Endothelial cell of umbilical vein (primary cell): ENCODE measurements at regions of chr2 and their contacts with region 1.

Region 1: DNA sequence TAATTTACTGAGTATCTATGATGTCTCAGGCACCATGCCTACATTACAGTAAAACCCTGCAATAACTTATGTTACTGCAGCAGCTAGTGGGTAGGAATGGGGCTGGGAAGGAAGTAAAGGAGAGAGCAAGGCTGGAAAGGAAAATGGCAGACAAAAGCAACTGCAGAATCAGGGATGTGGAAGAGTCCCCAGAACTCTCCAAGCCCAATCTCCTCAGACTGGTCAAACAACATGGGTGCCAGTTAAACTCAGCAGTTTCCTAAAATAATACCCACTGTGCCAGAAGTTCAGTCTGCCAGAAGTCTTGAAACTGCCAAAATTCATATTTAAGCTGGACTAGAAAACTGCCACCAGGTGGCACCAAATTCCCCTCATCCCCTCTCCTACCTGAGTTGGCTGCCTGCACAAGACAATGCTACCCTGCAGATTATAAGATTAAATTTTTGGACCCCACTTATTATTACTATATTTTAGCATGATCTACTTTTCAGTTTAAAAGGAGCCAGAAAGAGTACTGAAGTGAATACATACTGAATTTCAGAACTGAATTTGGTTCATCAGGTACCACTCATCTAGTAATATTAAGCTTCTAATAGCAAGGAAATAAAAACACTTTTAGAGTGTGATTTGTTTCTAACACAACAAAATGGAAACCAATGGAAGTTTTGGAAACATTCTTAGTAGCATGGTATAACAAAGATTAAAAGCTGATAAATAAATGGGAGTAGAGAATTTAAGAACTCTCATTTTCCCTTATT is 86.8 kb upstream of the DNER start:
- DNase-seq: peak; percentile 79
- H3K4me3 ChIP-seq: no peak overlapping the region
- H3K27ac ChIP-seq: no peak overlapping the region
- H3K4me1 ChIP-seq: no peaks in the 10 kb centered on the region
- H3K27me3 ChIP-seq: no peaks in the 10 kb centered on the region
- CTCF ChIP-seq: peak; percentile 64 to 69
- POLR2A ChIP-seq: no peak

Region 2: DNA sequence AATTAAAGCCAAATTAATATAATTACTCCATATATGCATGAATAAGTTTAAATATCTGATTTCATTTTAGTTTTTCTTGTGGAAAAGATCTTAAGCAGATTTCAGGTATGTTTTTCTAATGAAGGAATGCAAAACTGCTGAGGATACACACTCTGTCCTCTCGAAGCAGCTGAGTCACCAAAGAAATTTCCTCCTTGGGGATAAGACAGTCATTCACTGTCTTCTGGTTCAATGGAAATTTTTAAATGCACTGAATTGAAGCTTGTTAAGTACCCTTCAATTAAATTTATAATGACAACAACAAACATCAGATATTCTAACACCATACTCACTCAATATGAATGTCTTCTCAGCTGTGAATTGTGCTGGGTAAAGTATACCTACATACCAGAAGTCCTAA is 14.7 kb after region 1 on chr2:
- CTCF ChIA-PET with region 1: interaction called, 28 read pairs
- POLR2A ChIA-PET with region 1: no interaction called
- dilution Hi-C with region 1: no loop called
- intact Hi-C with region 1: no loop called
- DNase-seq: peak; percentile 38
- H3K4me3 ChIP-seq: no peak overlapping the region
- H3K27ac ChIP-seq: peak overlapping the region; percentile 32
- H3K4me1 ChIP-seq: peaks cover 13% of the 10 kb centered on the region
- H3K27me3 ChIP-seq: no peaks in the 10 kb centered on the region
- CTCF ChIP-seq: no peak
- POLR2A ChIP-seq: no peak

Region 3: GRCh38 chr2:229852565-229852964 is 51.4 kb after region 1 on chr2:
- CTCF ChIA-PET with region 1: interaction called, 10 read pairs
- POLR2A ChIA-PET with region 1: no interaction called
- dilution Hi-C with region 1: no loop called
- intact Hi-C with region 1: no loop called
- DNase-seq: peak; percentile 97
- H3K4me3 ChIP-seq: peak overlapping the region in 1 of 3 experiments; percentile 37
- H3K27ac ChIP-seq: peak overlapping the region; percentile 77
- H3K4me1 ChIP-seq: peaks cover 57% of the 10 kb centered on the region
- H3K27me3 ChIP-seq: no peaks in the 10 kb centered on the region
- CTCF ChIP-seq: no peak
- POLR2A ChIP-seq: peak; percentile 28

Region 4: DNA sequence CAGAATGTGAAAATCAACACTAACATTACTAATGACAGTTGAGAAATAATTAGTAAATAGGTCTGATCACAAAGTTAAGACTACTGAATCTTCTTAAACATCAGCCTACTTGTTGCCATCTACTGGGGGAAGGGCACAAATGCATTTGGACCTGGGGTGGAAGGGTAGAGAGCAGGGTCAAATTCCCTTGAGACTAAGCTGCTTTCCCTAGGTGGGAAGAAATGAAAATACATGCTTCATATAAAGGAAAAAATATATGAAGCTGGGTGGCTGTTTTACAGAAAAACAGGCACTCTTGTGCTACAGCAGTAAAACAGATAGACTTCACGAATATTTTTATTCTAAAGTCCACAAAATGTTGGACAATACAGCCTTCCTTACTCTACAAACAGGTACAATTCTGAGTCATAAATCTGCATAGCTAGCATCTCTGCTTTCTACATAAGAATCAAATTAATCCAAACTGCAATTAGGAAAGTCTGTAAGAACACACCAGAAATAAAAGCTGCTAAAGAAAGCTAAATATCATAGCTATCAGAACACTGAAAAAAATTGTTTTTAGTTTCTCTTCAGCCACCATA is 109.7 kb after region 1 on chr2:
- CTCF ChIA-PET with region 1: interaction called, 50 read pairs
- POLR2A ChIA-PET with region 1: no interaction called
- dilution Hi-C with region 1: no loop called
- intact Hi-C with region 1: loop called (anchors 2 kb)
- DNase-seq: peak; percentile 46
- H3K4me3 ChIP-seq: no peak overlapping the region
- H3K27ac ChIP-seq: no peak overlapping the region
- H3K4me1 ChIP-seq: no peaks in the 10 kb centered on the region
- H3K27me3 ChIP-seq: no peaks in the 10 kb centered on the region
- CTCF ChIP-seq: peak; percentile 15 to 17
- POLR2A ChIP-seq: no peak

Region 5: DNA sequence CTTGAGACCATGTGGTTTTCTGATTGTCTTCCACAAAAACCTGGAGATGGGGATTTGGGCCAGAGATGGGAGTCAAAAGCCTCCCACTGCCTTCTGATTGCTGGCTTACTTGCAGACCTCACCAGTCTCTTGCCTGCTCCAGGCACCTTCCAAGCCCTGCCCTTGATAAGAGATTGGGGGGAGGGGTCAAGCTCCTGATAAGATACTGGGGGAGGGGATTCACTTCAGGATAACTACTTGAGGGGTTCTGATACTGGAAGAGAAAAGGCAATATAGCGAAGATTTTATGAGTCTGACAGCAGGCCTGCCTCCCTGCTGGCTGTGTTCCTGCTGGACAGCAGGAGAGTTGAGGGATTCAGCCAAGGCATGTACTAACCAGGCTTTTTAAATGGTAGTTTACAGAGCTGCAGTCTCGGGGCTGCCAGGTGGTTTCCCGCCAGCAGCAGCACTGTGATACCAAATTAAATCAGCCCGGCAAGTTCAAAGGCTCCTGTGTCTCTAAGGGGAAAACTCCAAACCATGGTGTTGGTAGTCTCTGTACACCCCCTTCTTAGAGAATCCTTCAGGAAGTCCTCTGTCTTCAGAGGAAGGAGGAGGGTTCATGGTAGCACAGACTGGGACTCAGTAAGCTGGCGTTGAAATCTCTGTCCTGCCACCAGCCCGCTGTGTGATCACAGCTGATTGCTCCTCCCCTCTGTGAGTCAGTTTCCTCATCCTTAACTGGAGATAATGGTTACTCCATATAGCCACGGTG is 179.4 kb after region 1 on chr2:
- CTCF ChIA-PET with region 1: interaction called, 10 read pairs
- POLR2A ChIA-PET with region 1: no interaction called
- dilution Hi-C with region 1: no loop called
- intact Hi-C with region 1: loop called (anchors 2 kb)
- DNase-seq: peak; percentile 90
- H3K4me3 ChIP-seq: no peak overlapping the region
- H3K27ac ChIP-seq: peak overlapping the region; percentile 55
- H3K4me1 ChIP-seq: peaks cover 7% of the 10 kb centered on the region
- H3K27me3 ChIP-seq: no peaks in the 10 kb centered on the region
- CTCF ChIP-seq: no peak
- POLR2A ChIP-seq: no peak

Region 6: DNA sequence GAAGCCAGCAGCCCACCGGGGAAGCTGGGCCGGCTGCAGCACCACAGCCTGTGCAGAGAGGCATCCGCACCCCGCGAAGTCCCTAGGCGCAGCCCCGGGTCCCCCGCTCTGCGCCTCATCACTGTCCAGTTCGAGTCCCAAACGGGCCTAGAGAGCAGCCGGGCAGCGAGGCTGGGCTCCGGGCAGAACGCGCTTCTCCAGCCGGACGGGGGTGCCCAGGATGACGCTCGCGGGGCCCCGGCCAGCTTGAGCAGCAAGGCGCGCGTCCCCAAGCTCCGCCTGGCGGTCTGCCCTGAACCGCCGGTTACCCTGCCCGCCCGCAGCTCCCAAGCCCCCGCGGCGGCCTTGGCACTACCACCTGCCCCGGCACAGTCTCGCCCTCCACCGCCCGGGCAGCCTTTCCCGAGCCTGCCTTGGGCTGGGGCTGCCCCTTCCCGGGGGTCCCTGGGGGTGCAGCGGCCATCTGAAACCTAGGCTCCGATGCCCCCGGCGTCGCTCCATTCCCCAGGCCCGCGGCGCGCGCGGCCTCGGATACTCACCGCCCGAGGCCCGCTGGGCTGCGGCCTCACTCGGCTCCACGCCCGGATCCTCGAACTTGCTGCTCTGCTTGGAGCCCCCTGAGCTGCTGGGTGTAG is 267.0 kb after region 1 on chr2:
- CTCF ChIA-PET with region 1: interaction called, 11 read pairs
- POLR2A ChIA-PET with region 1: no interaction called
- dilution Hi-C with region 1: no loop called
- intact Hi-C with region 1: loop called (anchors 5 kb)
- DNase-seq: peak; percentile 50
- H3K4me3 ChIP-seq: peak overlapping the region; percentile 39 to 45 (median 44)
- H3K27ac ChIP-seq: no peak overlapping the region
- H3K4me1 ChIP-seq: peaks cover 7% of the 10 kb centered on the region
- H3K27me3 ChIP-seq: peaks cover 1 to 7% of the 10 kb centered on the region in 2 experiments
- CTCF ChIP-seq: peak in 1 of 2 donors; percentile 38
- POLR2A ChIP-seq: no peak

Region 7: DNA sequence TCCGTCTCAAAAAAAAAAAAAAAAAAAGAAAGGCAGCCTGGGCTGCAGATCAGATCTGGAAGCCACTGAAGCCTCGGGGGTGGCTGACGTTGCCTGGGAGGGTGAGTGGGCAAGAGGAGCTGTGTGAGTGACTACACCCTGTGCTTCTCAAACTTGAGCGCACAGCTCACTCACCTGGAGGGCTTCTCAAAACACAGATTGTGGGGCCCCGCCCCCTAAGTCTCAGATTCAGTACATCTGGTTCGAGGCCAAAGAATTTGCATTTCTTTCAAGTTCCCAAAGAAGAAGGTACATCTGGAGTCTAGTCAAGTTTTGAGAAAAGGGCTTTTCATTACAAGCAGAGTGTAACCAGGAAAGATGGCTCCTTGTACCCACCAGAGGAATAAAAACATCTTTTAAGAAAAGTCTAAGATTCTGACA is 813.7 kb after region 1 on chr2:
- CTCF ChIA-PET with region 1: interaction called, 3 read pairs
- POLR2A ChIA-PET with region 1: no interaction called
- dilution Hi-C with region 1: no loop called
- intact Hi-C with region 1: loop called (anchors 10 kb)
- DNase-seq: no peak
- H3K4me3 ChIP-seq: no peak overlapping the region
- H3K27ac ChIP-seq: no peak overlapping the region
- H3K4me1 ChIP-seq: peaks cover 2% of the 10 kb centered on the region
- H3K27me3 ChIP-seq: peaks cover 0 to 3% of the 10 kb centered on the region in 2 experiments
- CTCF ChIP-seq: no peak
- POLR2A ChIP-seq: no peak